RWPE1 (cell line): ENCODE measurements at regions of chr1 and their contacts with region 1.

Region 1: GRCh38 chr1:205061665-205062069 is 18.7 kb downstream of the CNTN2 start:
- DNase-seq: peak; percentile 81
- H3K27ac ChIP-seq: no peak overlapping the region
- CTCF ChIP-seq: peak; percentile 89

Region 2: GRCh38 chr1:204941421-204942338 is 120.0 kb before region 1 on chr1:
- CTCF ChIA-PET with region 1: interaction called, 10 read pairs
- POLR2A ChIA-PET with region 1: no interaction called
- DNase-seq: peak; percentile 75
- H3K27ac ChIP-seq: no peak overlapping the region
- CTCF ChIP-seq: peak; percentile 87

Region 3: DNA sequence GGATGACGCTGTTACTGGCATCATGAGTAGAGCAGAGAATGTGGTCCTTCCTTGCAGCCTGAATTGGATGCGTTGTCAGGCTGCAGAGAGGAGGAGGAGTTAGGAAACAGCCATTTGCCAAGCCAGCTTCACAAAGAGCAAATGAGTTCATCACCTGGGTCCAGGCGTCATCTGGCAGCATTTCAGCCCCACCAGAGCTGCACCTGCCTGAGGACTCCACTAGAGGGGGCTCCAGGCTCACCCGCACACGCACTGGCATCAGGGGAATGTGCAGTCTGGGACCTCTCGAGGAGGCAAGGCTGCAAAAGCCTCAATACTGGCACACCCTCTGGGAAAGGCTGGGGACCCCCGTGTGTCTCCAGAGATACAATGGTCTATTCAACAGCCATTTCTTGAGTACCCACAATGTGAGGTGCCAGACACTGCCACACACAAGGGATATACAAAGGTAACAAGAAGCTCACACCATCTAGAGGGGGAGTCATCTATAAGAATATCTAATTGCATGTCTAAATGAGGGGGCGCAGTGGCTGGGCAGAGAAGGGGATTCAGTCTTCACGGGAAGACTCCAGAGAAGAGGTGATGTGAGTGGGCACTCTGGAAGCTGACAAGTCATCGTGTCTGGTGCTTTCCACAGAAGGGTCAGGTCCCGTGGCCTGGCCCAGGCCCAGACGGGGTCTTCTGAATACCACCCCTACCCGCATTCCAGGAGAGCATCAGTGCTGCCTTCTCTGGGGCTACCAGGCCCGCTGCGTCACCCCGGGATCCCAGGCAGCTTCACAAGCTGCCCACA is 72.2 kb before region 1 on chr1:
- CTCF ChIA-PET with region 1: interaction called, 162 read pairs
- POLR2A ChIA-PET with region 1: interaction called, 3 read pairs
- DNase-seq: peak; percentile 95
- H3K27ac ChIP-seq: no peak overlapping the region
- CTCF ChIP-seq: peak; percentile 78

Region 4: GRCh38 chr1:205042911-205043806 is 18.5 kb before region 1 on chr1 and contains the start of gene CNTN2:
- CTCF ChIA-PET with region 1: interaction called, 20 read pairs
- POLR2A ChIA-PET with region 1: no interaction called
- DNase-seq: no peak
- H3K27ac ChIP-seq: no peak within 1 kb of the TSS
- CTCF ChIP-seq: no peak

Region 5: DNA sequence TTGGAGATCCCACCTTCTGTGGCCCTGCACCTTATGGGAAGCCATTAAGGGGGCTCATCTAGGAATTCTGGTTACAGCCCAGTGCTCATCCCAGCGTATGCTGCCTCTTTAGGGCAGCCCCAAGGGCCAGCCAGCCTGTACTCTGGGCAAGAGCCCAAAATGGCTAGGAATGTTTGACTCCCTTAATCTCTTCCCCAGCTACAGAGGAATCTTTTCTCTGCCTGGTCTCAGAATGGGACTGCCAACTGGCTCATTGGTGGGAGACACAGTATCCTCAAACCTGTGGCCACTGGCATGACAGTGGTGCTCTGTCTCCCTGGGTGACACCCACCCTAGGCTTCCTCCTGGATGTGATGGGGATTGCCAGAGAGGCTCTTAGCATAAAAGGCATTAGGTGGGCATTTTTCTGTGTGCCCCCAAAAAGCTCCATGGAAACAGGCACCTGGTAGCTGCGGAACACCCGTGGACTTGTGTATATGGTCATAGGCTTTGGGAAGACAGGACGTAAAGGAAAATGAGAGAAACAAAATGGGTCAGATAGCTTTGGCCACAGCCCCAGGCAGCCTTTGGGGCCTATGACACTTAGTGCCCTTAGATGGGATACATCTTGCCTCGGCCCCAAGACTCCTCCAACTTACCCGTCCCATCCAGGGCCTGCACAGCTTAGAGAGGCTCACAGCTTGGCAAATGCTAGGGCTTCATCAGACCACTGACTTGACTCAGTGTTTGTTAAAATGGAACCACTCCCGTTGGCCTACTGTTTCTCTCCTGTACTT is 15.7 kb after region 1 on chr1:
- CTCF ChIA-PET with region 1: interaction called, 58 read pairs
- POLR2A ChIA-PET with region 1: no interaction called
- DNase-seq: no peak
- H3K27ac ChIP-seq: peak overlapping the region; percentile 64; the same call in 1 of the 2 replicates
- CTCF ChIP-seq: no peak

Region 6: GRCh38 chr1:205255941-205256780 is 194.5 kb after region 1 on chr1:
- CTCF ChIA-PET with region 1: interaction called, 15 read pairs
- POLR2A ChIA-PET with region 1: no interaction called
- DNase-seq: peak; percentile 88
- H3K27ac ChIP-seq: peak overlapping the region; percentile 51
- CTCF ChIP-seq: peak; percentile 94